ENCODE measurements at regions of chr11 and their contacts with region 1.

Region 1: GRCh38 chr11:12888525-12889158 is 120.5 kb upstream of the RASSF10 start:
- DNase-seq: peak; percentile 92
- ATAC-seq: peak; percentile 84

Region 2: DNA sequence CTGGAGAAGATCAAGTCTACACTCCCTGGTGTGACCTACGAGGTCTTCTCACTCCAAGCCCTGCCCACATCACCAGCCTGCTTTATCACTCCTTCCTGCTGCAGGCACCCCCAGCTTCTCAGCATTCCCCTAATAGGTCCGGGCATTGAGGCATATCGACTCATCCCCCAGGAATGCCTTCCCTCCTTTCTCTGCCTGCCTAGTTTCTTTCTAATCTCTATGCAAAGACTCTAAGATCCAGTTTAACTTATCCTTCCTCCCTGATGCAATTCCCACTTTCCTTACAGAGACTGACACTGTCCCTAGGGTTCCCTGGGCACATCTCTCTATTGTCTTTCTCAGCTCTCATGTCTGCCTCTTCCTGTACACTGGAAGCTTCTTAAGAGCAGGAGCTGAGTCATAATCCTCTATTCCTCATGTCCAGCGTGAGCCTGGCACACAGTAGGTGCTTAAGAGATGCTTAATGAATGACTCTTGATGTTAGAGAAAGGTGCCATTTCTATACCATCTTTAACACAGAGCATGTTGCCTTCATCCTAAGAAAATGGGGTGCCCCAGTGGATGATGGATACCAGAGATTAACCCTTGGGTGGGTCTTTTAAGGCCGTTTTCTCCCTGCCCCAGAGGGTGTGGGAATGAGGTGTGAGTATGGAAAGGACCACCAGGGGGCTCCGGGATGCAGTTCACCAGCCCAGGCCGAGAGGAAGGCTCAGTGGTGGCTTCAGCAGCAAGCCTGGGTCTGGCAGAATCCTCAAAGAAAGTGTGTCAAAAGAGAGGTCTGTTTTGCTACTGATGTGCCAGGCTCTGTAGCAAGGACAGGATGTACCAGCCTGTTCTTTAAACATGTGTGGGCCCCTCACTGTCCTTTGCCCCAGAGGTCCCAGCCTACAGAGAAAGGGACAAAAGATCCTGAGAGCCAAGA is 476.6 kb before region 1 on chr11:
- intact Hi-C with region 1: loop called (anchors 10 kb)
- DNase-seq: peak; percentile 74
- ATAC-seq: peak; percentile 83

Region 3: DNA sequence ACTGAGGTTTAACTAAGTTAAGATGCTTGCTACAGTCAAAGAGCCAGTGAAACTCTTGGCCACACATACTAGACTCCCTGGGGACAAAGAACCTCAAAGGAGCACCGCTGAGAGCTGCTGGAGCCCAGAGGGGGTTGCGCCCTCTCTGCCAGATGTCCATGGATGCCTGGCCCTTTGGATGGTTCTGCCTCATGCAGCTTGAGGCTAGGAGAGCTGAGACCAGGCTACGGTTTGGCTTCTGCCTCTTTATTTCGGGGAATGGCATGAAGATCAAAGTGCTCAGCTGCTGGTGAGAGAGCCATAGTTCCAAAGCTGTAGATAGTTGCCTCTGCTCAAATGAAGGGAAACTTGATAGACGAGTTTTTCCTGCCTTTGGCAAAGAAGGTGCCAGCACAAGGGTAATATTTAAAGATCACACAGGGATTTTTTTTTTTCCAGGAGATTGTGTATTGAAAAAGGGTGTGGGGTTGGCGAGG is 163.5 kb after region 1 on chr11:
- intact Hi-C with region 1: no loop called
- DNase-seq: no peak
- ATAC-seq: no peak

Measured in left ventricle myocardium superior (tissue), 1 donor.